AG04450 (cell line): ENCODE measurements at regions of chr12 and their contacts with region 1.

Region 1: GRCh38 chr12:119780786-119781434 is 96.2 kb downstream of the CIT start:
- DNase-seq: no peak
- H3K4me3 ChIP-seq: no peak overlapping the region
- H3K27ac ChIP-seq: no peak overlapping the region
- H3K27me3 ChIP-seq: no peaks in the 10 kb centered on the region
- CTCF ChIP-seq: peak; percentile 90

Region 2: DNA sequence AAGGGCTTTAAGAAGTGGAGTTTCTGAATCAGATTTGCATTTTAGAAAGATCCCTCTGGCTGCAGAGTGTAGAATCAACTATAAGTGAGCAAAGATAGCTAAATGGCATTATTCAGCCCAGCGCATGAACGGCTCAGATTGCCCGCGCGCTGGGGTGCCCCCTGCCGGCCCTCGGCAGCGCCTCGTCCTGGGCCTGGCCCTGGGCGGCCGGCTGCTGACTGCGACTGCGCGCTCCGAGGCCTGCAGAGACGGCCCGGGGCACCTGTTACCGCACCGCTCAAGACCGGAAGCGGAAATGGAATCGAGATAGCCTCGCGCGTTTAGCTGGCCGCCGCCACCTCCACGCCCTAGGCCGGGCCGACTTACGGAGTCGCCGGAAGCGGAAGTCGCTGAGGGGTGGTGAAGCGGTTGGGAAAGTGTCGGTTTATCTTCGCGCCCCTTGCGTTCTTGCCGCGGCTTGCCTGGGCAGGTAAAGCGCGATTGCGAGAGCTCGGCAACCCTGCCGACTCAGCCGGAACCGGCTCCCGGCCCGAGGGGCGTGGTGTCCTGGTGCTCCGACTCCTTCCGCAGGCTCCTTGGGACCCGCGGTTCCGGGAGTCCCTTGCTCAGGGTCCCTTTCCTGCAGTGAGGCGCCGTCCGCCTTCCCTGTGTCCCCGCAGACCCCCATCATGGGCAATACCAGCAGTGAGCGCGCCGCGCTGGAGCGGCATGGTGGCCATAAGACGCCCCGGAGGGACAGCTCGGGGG is 113.2 kb before region 1 on chr12 and contains the start of gene PRKAB1:
- CTCF ChIA-PET with region 1: interaction called, 17 read pairs
- POLR2A ChIA-PET with region 1: no interaction called
- DNase-seq: peak; percentile 93
- H3K4me3 ChIP-seq: peak within 1 kb of the TSS; percentile 98
- H3K27ac ChIP-seq: peak within 1 kb of the TSS; percentile 57
- H3K27me3 ChIP-seq: peaks cover 3% of the 10 kb centered on the region
- CTCF ChIP-seq: peak; percentile 84
- polyA plus RNA-seq, gene PRKAB1: 33.8 and 34.3 TPM in 2 replicates

Region 3: GRCh38 chr12:119695034-119695433 is 85.9 kb before region 1 on chr12:
- CTCF ChIA-PET with region 1: interaction called, 20 read pairs
- POLR2A ChIA-PET with region 1: no interaction called
- DNase-seq: no peak
- H3K4me3 ChIP-seq: no peak overlapping the region
- H3K27ac ChIP-seq: no peak overlapping the region
- H3K27me3 ChIP-seq: no peaks in the 10 kb centered on the region
- CTCF ChIP-seq: peak; percentile 66

Region 4: DNA sequence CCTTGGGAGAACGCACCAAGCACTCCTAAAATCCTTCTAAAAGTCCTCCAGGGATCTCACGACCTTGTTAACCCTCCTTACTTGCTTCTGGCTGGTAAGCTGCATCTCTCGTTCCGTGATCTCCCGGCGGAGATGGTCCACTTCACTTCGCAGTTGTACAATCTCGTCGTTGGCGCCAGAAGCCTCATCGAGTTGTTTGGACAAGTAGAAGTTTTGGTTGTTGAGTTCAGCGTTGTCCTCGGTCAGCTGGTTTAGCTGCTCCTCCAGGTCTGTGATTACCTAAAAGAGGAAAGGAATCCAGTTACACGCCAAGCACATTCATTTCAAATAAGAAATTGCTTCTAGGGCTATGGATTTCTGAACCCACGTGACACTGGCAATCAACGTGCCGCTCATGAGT is 45.8 kb before region 1 on chr12:
- CTCF ChIA-PET with region 1: interaction called, 17 read pairs
- POLR2A ChIA-PET with region 1: no interaction called
- DNase-seq: no peak
- H3K4me3 ChIP-seq: no peak overlapping the region
- H3K27ac ChIP-seq: no peak overlapping the region
- H3K27me3 ChIP-seq: no peaks in the 10 kb centered on the region
- CTCF ChIP-seq: no peak

Region 5: DNA sequence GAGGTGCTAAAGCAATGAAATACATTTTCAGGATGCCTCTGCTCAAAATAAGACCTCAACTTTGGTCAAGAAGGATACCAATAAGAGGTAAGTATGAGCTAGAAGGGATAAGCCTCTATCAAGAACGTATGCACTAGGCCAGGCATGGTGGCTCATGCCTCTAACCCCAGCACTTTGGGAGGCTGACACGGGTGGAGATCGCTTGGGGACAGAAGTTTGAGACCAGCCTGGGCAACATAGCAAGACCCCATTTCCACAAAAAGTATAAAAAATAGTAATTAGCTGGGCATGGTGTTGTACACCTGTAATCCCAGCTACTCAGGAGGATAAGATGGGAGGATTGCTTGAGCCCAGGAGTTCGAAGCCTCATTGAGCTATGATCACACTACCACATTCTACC is 18.3 kb before region 1 on chr12:
- CTCF ChIA-PET with region 1: interaction called, 25 read pairs
- POLR2A ChIA-PET with region 1: no interaction called
- DNase-seq: no peak
- H3K4me3 ChIP-seq: no peak overlapping the region
- H3K27ac ChIP-seq: no peak overlapping the region
- H3K27me3 ChIP-seq: no peaks in the 10 kb centered on the region
- CTCF ChIP-seq: no peak

Region 6: GRCh38 chr12:119804011-119804641 is 23.2 kb after region 1 on chr12:
- CTCF ChIA-PET with region 1: interaction called, 60 read pairs
- POLR2A ChIA-PET with region 1: no interaction called
- DNase-seq: no peak
- H3K4me3 ChIP-seq: peak overlapping the region; percentile 60
- H3K27ac ChIP-seq: no peak overlapping the region
- H3K27me3 ChIP-seq: no peaks in the 10 kb centered on the region
- CTCF ChIP-seq: peak; percentile 27; the same call in 1 of the 2 replicates

Region 7: DNA sequence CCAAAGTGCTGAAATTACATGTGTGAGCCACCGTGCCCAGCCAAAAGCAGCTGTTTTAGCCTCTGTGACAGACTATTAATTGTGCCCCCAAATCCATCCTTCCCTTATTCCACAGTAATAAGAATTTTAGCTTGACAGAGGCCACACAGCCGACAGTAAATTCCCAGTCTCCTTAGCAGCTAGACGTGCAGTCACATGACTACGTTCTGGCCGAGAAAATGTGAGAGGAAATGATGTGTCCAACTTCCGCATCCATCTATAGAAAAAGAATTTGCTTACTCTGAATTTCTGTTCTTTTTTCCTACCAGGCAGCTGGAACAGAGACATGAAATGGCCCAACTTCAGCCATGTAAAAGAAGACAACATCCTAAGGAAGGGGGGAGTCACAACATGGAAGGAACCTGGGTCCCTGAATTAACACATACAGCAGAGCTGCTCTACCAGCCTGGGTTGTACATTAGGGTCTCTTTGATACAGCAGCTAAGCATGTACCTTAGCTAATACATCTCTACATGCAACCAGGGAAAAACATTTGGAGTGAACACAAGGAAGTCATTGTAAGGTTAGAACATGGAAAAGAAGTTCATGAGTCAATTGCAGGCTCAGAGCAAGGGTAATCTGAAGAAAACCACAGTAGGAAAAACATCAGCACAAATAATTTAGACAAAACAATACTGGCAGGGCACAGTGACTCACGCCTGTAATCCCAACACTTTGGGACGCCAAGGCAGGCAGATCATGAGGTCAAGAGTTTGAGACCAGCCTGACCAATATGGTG is 60.7 kb after region 1 on chr12:
- CTCF ChIA-PET with region 1: interaction called, 10 read pairs
- POLR2A ChIA-PET with region 1: no interaction called
- DNase-seq: no peak
- H3K4me3 ChIP-seq: no peak overlapping the region
- H3K27ac ChIP-seq: no peak overlapping the region
- H3K27me3 ChIP-seq: no peaks in the 10 kb centered on the region
- CTCF ChIP-seq: no peak